ENCODE measurements at regions of chr11 and their contacts with region 1.

Region 1: GRCh38 chr11:10735481-10736475 is 15.3 kb upstream of the CTR9 start:
- DNase-seq: peak in 1 of 2 donors; percentile 95
- H3K4me3 ChIP-seq: no peak overlapping the region
- H3K27ac ChIP-seq: peak overlapping the region; percentile 68
- H3K4me1 ChIP-seq: peaks cover 14% of the 10 kb centered on the region
- H3K27me3 ChIP-seq: no peaks in the 10 kb centered on the region
- CTCF ChIP-seq: peak; percentile 98 to 99 (median 99)
- POLR2A ChIP-seq: no peak

Region 2: DNA sequence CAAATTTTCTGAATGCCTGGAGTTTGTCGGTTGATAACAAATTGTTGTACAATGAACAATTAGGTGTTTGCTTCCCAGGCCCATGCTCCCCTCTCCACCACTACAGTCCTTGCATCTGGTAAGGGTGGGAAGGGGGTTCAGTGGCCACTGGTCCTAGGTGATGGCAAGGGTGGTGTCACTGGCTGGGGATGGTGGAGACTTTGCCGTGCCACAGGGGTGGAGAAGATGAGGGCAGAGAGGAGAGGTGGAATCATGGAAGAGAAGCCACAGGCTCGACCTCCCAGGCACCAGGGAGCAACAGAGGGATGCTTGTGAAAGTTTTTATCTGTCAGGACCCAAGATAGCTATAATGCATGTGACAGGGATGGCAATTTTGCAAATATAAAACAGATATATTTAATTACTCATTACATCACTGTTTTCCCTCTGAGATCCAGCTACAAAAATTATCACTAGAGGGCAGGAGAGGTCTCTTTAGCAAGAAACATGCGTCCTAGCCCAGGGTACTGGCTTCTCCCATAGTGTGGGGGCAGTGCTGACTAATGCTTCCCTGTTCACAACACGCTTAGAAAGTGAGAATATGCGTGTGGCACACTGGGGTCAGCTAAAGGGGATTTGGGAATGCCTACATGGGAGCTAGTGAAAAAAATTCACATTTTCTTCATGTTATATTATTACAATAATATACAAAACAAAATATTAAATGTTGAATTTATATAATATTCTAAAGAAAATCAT is 329.8 kb before region 1 on chr11:
- intact Hi-C with region 1: loop called (anchors 1 kb)
- DNase-seq: peak in 1 of 2 donors; percentile 95
- H3K4me3 ChIP-seq: no peak overlapping the region
- H3K27ac ChIP-seq: peak overlapping the region; percentile 6
- H3K4me1 ChIP-seq: peaks cover 25% of the 10 kb centered on the region
- H3K27me3 ChIP-seq: no peaks in the 10 kb centered on the region
- CTCF ChIP-seq: peak; percentile 69 to 77 (median 75)
- POLR2A ChIP-seq: no peak

Region 3: DNA sequence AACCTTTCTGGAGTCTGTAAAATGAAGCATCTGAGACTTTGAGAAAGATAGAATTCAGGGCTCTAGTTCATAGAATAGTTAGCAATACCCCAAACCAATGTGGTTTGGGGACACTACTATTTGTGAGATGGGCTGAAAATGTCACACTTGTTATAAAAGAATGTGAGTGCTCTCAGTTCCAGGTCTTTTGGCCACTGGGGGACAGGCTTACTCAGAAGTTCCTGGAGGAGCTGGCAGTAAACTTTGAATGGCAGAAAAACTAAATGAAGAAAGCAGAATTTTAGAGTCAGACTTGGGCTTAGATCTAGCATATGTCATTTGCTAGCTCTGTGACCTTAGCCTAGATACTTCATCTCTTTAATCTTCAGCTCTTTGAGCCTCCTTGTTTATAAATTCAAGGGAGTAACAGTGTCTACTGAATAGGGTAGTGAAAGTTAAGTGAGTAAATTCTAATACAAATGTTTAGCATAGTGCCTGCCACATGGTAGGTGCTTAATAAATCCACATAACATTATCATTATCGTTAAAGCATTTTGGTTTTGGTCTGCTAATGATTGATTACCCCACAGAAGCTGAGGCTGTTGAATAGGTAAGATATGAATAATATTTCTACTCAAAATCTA is 171.0 kb before region 1 on chr11:
- intact Hi-C with region 1: loop called (anchors 10 kb)
- DNase-seq: no peak
- H3K4me3 ChIP-seq: no peak overlapping the region
- H3K27ac ChIP-seq: no peak overlapping the region
- H3K4me1 ChIP-seq: no peaks in the 10 kb centered on the region
- H3K27me3 ChIP-seq: no peaks in the 10 kb centered on the region
- CTCF ChIP-seq: peak in 1 of 3 experiments; percentile 20
- POLR2A ChIP-seq: no peak

Region 4: GRCh38 chr11:10623797-10624761 is 111.7 kb before region 1 on chr11:
- intact Hi-C with region 1: loop called (anchors 10 kb)
- DNase-seq: no peak
- H3K4me3 ChIP-seq: no peak overlapping the region
- H3K27ac ChIP-seq: peak overlapping the region; percentile 37
- H3K4me1 ChIP-seq: peaks cover 26% of the 10 kb centered on the region
- H3K27me3 ChIP-seq: no peaks in the 10 kb centered on the region
- CTCF ChIP-seq: peak in 1 of 3 experiments; percentile 18
- POLR2A ChIP-seq: no peak

Measured in vagina (tissue), 2 donors.